OCI-LY7 (cell line): ENCODE measurements at regions of chr12 and their contacts with region 1.

Region 1: GRCh38 chr12:6965026-6965661 is 5.3 kb downstream of the PHB2 start:
- DNase-seq: peak; percentile 86
- H3K4me3 ChIP-seq: no peak overlapping the region
- H3K27ac ChIP-seq: peak overlapping the region; percentile 64
- H3K4me1 ChIP-seq: peaks cover 69% of the 10 kb centered on the region
- CTCF ChIP-seq: peak; percentile 98

Region 2: GRCh38 chr12:6937481-6938297 is 27.5 kb before region 1 on chr12:
- CTCF ChIA-PET with region 1: interaction called, 110 read pairs
- POLR2A ChIA-PET with region 1: interaction called, 55 read pairs
- intact Hi-C with region 1: loop called (anchors 5 kb)
- DNase-seq: peak; percentile 98
- H3K4me3 ChIP-seq: peak overlapping the region; percentile 81
- H3K27ac ChIP-seq: peak overlapping the region; percentile 87
- H3K4me1 ChIP-seq: peaks cover 15% of the 10 kb centered on the region
- CTCF ChIP-seq: peak; percentile 93

Region 3: DNA sequence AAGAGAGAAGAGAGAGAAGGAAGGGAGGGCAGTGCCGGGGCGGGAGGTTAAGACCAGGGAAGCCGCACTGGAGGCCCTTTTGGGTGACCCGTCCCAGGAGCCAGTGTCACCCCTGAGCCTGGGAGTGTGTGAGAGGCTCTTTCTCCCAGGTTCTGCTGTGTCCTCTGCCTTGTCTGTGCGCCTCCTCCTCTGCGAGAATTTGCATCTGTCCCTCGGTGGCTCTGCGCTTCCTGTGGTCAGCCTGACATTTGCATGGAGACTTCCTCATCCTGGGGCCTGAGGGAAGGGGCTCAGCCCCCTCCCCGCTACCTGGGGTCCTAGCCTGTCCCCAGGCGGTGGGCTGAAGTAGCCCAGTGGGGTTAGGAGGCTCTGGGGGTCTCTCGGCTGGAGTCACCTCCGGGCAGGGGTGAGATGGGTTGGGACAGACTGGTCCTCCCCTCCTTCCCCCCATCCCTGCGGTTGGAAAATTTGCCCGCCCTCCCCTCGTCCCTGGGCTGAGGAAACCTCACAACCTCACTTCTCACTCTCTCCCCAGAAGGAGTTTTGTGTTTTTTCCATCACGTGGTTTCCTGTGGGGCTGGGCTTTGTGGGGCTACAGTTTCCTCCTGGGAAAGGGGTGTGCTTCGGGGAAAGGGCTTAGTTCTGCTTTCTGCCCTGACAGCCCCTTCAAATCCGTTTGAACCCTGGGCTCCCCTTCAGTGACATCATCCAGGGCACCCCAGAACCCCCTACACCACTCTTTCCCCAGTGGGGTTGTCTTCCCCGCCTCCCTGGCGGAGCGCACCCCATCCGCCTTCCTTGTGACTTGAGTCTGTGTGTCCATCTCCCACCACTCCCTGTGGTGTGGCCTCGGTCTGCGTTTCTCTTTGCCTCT is 11.5 kb before region 1 on chr12:
- CTCF ChIA-PET with region 1: interaction called, 3 read pairs
- POLR2A ChIA-PET with region 1: interaction called, 16 read pairs
- intact Hi-C with region 1: no loop called
- DNase-seq: peak; percentile 85
- H3K4me3 ChIP-seq: peak overlapping the region; percentile 67
- H3K27ac ChIP-seq: peak overlapping the region; percentile 48
- H3K4me1 ChIP-seq: peaks cover 88% of the 10 kb centered on the region
- CTCF ChIP-seq: no peak

Region 4: GRCh38 chr12:7018350-7019042 is 53.4 kb after region 1 on chr12 and contains the start of gene LPCAT3:
- CTCF ChIA-PET with region 1: no interaction called
- POLR2A ChIA-PET with region 1: interaction called, 4 read pairs
- intact Hi-C with region 1: loop called (anchors 1 kb)
- DNase-seq: peak; percentile 97
- H3K4me3 ChIP-seq: peak within 1 kb of the TSS; percentile 82
- H3K27ac ChIP-seq: peak within 1 kb of the TSS; percentile 78
- H3K4me1 ChIP-seq: peaks cover 26% of the 10 kb centered on the region
- CTCF ChIP-seq: peak; percentile 83
- total RNA-seq, gene LPCAT3: 11.6 and 17.4 TPM in 2 replicates